Activated T-helper 2 cell treated with anti-CD3 and anti-CD28 coated beads, Interferon-gamma antibody, Interleukin-2, Interleukin-4, amounts not matched to agents 10 μg/mL and 5 μg/mL and 100 μg/mL, durations not matched to agents 14 hours and 24 hours and 36 hours (primary cell): ENCODE measurements at regions of chr16 and their contacts with region 1.

Region 1: DNA sequence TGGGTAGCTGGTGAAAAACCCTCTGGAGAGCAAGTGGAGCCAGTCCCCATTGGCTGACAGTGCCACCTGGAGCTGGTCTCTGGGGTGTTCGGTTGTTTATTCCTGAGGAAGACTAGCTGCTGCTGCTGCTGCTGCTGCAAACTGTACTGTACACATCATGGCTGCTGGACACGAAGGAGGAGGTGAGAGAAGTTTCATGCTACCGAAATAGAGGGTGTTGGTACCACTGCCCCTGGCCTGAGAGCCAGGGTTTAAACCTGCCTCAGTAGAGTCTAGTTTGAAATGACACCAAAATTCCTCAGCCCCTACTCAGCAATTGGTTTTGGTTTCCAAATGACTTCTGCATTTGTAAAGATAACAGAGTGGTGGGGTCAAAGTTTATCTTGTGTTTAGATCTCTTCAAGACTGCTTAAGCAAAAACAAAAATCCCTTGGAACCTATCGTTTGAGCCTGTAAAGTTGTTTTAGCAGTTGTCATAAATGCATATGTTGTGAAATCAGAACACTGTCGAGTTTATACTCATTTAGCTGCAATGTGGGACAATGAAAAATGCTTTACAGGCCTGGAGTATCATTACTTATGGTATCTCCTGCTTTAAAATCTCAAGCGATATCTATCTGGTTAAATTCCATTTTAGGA is 40.8 kb downstream of the CYB5B start:
- DNase-seq: peak; percentile 27
- H3K4me3 Mint-ChIP-seq: peak overlapping the region; percentile 59
- H3K27ac Mint-ChIP-seq: peak overlapping the region; percentile 93
- H3K4me1 Mint-ChIP-seq: peaks cover 64% of the 10 kb centered on the region
- H3K27me3 Mint-ChIP-seq: no peaks in the 10 kb centered on the region

Region 2: DNA sequence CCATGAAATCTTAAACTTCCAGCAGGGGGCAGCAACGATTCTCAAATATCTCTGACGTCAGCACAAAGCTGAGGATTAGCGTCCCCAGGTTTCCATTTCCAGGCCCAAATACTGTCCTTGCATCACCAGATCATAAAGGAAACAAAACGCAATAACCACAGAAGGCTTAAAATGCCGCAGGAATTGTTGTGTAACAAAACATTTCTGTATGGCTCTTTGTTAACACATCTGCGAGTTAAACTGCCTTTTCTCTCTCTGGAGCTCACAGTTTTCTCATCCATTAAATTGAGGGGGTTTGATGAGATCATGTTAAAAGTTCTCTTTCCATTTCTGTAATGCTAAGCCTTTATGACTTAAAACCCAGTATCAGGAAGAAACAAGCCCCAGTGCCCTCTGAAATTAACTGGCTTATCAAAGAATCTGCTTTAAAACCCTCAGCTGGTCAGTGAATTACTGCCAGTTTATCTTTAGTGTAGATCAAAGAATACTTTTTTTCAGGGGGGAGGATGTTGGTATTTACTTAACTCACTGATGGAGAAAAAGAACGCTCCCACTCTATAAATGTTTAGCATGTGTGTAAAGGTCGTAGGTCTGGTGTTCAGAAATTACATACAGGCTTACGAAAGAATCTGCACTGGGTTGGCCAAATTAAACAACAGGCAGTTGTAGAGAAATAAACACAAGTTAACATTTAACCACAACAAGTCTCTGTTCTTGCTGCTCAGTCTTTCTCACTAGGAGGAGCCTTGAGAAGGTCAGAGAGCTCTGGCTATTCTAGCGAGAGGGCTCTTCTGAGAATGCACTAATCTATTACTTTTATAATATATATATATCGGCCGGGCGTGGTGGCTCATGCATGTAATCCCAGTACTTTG is 68.8 kb before region 1 on chr16:
- intact Hi-C with region 1: loop called (anchors 5 kb)
- DNase-seq: peak; percentile 57
- H3K4me3 Mint-ChIP-seq: no peak overlapping the region
- H3K27ac Mint-ChIP-seq: peak overlapping the region; percentile 61
- H3K4me1 Mint-ChIP-seq: peaks cover 27% of the 10 kb centered on the region
- H3K27me3 Mint-ChIP-seq: peaks cover 5% of the 10 kb centered on the region

Region 3: GRCh38 chr16:69424053-69424934 is 40.9 kb before region 1 on chr16 and contains the start of gene CYB5B:
- intact Hi-C with region 1: loop called (anchors 2 kb)
- DNase-seq: peak; percentile 95
- H3K4me3 Mint-ChIP-seq: peak within 1 kb of the TSS; percentile 96
- H3K27ac Mint-ChIP-seq: peak within 1 kb of the TSS; percentile 89
- H3K4me1 Mint-ChIP-seq: peaks cover 23% of the 10 kb centered on the region
- H3K27me3 Mint-ChIP-seq: no peaks in the 10 kb centered on the region
- total RNA-seq, gene CYB5B: 201 and 204 TPM in 2 replicates

Region 4: DNA sequence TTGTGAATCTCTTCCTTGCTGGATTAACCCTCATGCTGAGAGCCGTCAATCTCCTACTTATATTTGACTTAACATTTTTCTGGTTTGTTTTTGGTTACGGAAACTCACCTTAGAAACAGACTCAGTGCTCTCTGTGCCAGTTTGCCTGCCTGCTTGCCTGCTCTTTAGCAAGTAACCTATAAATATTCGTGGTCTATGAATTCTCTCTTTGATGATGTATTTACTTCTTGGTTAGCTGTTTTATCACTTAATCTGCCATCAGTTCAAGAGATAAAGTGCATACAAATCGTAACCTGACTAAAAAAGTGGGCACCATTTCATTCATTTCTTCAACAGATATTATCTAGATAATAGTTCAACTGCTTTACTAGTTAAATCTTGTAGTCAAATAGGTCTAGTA is 14.0 kb before region 1 on chr16:
- intact Hi-C with region 1: loop called (anchors 1 kb)
- DNase-seq: no peak
- H3K4me3 Mint-ChIP-seq: peak overlapping the region; percentile 27
- H3K27ac Mint-ChIP-seq: peak overlapping the region; percentile 83
- H3K4me1 Mint-ChIP-seq: peaks cover 42% of the 10 kb centered on the region
- H3K27me3 Mint-ChIP-seq: no peaks in the 10 kb centered on the region

Region 5: GRCh38 chr16:69520800-69521602 is 55.8 kb after region 1 on chr16:
- intact Hi-C with region 1: no loop called
- DNase-seq: no peak
- H3K4me3 Mint-ChIP-seq: no peak overlapping the region
- H3K27ac Mint-ChIP-seq: peak overlapping the region; percentile 75
- H3K4me1 Mint-ChIP-seq: peaks cover 26% of the 10 kb centered on the region
- H3K27me3 Mint-ChIP-seq: no peaks in the 10 kb centered on the region

Region 6: DNA sequence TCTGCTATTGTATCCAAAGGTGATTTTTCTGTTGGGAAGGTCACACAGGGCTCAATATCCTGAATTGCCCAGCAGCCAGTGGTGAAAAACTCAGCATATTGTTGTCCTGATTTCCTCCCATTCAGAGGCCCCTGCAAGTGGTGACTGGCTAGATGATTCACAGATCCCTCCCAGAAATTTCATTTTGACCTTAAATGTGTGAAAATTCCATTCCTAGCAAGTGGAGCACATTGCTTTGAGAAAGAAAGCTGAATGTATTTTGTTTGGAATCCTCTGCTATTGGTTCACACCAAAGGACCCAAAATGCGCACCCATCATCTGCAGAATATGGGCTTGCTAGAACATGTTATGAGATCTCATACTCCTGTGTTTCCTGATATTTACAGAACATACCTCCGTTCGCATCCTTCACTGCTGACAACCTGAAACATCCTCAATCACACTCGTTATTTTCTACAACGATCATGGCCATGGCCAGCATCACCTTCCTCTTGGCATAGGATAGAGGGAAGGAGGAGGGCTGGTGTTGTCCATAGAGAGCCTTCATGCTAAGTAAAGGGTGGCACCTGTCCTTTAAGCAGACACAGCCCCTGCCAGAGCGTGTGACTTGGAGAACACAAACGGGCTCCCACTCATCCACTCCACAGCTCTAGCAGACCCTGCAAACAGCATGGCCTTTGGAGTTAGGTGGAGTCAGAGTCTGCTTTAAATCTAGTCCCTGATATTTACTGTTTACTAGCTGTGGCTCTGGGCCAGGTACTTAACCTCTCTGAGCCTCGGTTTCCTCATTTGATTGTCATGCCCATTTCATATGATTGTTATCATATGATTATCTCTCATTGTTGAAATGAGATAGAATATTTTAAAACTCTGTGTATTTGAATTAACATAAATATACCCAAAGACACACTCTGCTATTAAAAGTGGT is 70.2 kb after region 1 on chr16:
- intact Hi-C with region 1: loop called (anchors 2 kb)
- DNase-seq: no peak
- H3K4me3 Mint-ChIP-seq: no peak overlapping the region
- H3K27ac Mint-ChIP-seq: no peak overlapping the region
- H3K4me1 Mint-ChIP-seq: peaks cover 28% of the 10 kb centered on the region
- H3K27me3 Mint-ChIP-seq: peaks cover 2% of the 10 kb centered on the region

Region 7: DNA sequence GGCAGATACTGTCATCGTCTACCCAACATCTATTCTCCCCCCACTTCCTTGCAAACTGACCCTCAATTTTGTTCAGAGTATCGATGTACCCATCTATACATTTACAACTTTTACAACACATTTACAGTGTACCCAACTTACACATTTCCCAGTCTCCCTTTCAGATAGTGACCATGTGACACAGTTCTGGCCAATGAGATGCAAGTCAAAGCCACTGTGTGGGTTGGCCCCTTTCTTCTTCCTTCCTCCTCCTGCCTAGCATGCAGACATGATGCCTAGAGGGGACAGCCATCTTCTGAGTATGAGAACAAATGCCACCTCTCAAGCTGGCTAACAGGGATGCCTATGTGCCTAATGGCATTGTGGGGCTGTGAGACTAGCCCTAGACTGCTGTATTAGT is 89.3 kb after region 1 on chr16:
- intact Hi-C with region 1: no loop called
- DNase-seq: no peak
- H3K4me3 Mint-ChIP-seq: no peak overlapping the region
- H3K27ac Mint-ChIP-seq: no peak overlapping the region
- H3K4me1 Mint-ChIP-seq: peaks cover 19% of the 10 kb centered on the region
- H3K27me3 Mint-ChIP-seq: no peaks in the 10 kb centered on the region